Activated T-helper 1 cell treated with anti-CD3 and anti-CD28 coated beads, Interleukin-12 subunit alpha, Interleukin-12 subunit beta, Interleukin-2, Interleukin-4 antibody, amounts not matched to agents 30 ng/mL and 10 ng/mL and 1 ng/mL, durations not matched to agents 14 hours and 24 hours and 36 hours (primary cell): ENCODE measurements at regions of chr6 and their contacts with region 1.

Region 1: DNA sequence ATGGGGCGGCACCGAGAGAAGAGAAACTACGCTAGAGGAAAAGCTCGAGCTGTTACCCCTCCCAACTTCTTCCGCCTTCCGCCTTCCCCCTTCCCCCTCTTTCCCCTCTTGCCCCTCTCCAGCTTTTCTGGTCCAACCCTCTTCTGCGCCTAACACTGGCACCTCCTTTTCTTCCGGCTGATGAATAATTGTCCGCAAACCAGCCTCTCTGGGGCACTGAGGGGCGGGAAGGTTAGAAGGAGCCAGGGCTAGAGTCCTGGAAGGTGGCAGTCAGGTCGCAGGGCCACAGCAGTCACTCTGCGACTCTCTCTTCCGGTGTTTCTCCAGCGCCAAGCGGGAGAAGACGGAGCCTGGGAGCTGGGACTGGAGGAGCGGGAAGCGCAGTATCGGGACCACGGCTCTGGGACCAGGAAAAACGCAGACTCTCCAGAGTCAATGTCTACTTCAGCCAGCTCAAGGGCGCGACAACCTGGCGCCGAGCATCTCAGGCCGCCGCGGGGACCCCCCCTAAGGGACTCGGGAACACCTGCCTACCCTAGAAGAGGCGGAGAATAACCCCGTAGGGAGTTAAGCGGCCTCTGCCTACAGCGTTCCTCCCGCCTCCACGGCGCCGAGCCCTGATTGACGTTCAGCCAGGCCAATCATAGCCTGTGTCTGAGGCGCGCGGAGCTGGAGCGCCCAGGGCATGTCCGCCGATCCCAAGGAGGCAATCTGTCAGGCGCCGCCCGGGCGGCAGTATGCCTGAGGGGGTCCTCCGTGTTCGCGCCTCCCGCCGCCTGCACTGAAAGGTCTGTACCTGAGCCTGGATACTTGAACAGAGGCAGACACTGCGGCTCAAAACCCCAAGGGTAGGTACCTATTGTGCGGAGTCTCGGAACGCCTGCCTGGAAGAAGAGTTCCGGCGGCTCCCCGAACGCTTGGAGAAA is 40.4 kb downstream of the PSMB9 start:
- DNase-seq: peak; percentile 95
- H3K4me3 Mint-ChIP-seq: peak overlapping the region; percentile 99
- H3K27ac Mint-ChIP-seq: peak overlapping the region; percentile 92
- H3K4me1 Mint-ChIP-seq: peaks cover 48% of the 10 kb centered on the region
- H3K27me3 Mint-ChIP-seq: peaks cover 12% of the 10 kb centered on the region

Region 2: GRCh38 chr6:32838114-32838958 is 56.0 kb before region 1 on chr6 and contains the start of gene TAP2:
- intact Hi-C with region 1: loop called (anchors 2 kb)
- DNase-seq: peak; percentile 97
- H3K4me3 Mint-ChIP-seq: peak within 1 kb of the TSS; percentile 79
- H3K27ac Mint-ChIP-seq: peak within 1 kb of the TSS; percentile 89
- H3K4me1 Mint-ChIP-seq: peaks cover 87% of the 10 kb centered on the region
- H3K27me3 Mint-ChIP-seq: no peaks in the 10 kb centered on the region
- total RNA-seq, gene TAP2: 160 and 167 TPM in 2 replicates

Region 3: DNA sequence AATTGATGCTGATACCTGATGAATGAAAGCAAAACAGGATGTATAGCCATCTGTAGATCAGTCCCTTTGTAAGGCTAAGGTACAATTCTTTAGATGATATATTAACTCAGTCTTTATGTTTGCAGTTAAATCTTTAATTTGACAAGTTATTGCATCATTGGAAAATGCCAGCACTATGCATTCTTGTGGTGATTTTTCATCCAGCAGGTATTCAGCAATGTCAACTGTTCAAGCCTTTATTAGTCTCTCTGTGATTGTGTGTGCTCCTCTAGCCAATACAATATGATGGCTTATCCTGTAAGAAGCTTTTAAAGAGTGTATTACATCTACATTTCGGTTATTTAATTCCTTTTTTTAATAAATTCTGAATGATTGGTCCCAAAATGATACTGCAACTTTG is 12.2 kb after region 1 on chr6:
- intact Hi-C with region 1: no loop called
- DNase-seq: no peak
- H3K4me3 Mint-ChIP-seq: no peak overlapping the region
- H3K27ac Mint-ChIP-seq: no peak overlapping the region
- H3K4me1 Mint-ChIP-seq: no peaks in the 10 kb centered on the region
- H3K27me3 Mint-ChIP-seq: peaks cover 6% of the 10 kb centered on the region

Region 4: DNA sequence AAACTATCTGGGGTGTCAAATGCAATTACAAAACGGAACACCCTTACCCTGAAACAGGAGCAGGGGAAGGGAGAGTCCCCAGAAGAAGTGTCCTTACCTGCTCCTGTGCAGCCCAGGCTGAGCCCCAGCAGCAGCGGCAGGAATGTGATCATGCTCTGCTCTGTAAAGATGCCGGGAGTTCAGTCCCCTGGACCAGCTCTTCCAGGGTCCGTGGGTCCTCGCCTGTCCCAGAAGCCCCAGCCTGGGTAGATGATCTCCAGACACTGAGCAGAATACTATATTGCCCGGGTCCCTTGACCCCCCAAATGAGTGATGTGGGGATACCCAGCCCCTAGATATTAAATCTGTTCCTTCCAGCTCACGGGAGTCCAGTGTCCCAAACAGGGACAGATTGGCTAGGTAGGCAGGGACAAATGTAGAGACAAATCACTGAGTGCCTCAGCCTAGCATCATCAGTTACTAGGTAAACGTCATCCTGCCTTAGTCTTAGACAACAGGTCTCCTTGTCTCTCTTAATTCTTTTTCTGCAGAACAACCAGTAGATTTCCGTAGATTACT is 46.4 kb after region 1 on chr6 and contains the start of gene HLA-DMB:
- intact Hi-C with region 1: loop called (anchors 1 kb)
- DNase-seq: peak; percentile 52
- H3K4me3 Mint-ChIP-seq: peak within 1 kb of the TSS; percentile 80
- H3K27ac Mint-ChIP-seq: peak within 1 kb of the TSS; percentile 91
- H3K4me1 Mint-ChIP-seq: peaks cover 59% of the 10 kb centered on the region
- H3K27me3 Mint-ChIP-seq: peaks cover 4% of the 10 kb centered on the region
- total RNA-seq, gene HLA-DMB: 2.7 and 2.8 TPM in 2 replicates

Region 5: DNA sequence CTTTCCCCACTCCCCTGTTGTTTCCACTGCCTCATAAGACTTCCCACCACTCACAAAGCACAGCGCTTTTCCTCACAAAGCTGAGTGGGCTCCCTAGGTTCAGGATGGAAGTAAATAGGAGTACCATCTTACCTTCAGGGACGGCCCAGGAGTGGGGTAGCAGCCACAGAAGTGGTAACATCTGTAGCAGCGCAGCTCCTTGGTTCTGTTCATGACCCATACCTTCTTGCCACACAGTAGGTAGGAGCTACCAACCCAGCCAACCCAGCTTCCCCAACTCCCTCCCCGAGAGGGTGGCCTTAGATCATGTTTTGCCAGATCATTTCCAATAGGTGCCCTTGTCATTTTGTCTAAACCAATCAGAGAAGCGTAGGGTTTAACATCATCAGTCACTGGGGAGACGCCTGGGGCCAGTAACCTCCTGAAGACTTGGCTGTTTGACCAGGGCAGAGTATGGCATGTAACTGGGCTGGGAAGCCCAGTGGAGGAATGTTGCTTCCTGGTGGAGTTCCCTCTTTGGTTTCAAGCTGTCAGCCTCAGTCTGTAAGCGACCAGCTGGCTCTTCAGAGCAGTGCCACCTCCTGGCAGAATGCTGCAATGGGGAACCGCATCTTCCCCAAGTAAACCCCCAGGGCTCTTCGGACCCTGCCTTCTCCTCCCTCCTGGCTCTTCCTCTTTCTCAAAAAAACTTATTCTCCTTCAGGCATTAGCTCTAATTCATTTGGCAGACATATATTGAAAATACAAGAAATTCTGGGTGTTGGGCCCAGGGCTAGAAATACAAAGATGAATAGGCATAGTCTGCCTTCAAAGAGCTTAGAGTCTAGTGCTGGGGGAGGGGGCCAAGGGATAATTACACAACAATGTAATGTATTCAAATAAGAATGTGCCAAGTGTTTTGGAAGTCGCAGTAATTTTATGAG is 58.7 kb after region 1 on chr6 and contains the start of gene HLA-DMA:
- intact Hi-C with region 1: loop called (anchors 1 kb)
- DNase-seq: peak; percentile 79
- H3K4me3 Mint-ChIP-seq: peak within 1 kb of the TSS; percentile 81
- H3K27ac Mint-ChIP-seq: peak within 1 kb of the TSS; percentile 72
- H3K4me1 Mint-ChIP-seq: peaks cover 57% of the 10 kb centered on the region
- H3K27me3 Mint-ChIP-seq: no peaks in the 10 kb centered on the region
- total RNA-seq, gene HLA-DMA: 14.1 and 14.2 TPM in 2 replicates

Region 6: GRCh38 chr6:32984605-32985389 is 90.5 kb after region 1 on chr6:
- intact Hi-C with region 1: loop called (anchors 2 kb)
- DNase-seq: peak; percentile 78
- H3K4me3 Mint-ChIP-seq: no peak overlapping the region
- H3K27ac Mint-ChIP-seq: peak overlapping the region; percentile 73
- H3K4me1 Mint-ChIP-seq: peaks cover 37% of the 10 kb centered on the region
- H3K27me3 Mint-ChIP-seq: no peaks in the 10 kb centered on the region

Region 7: GRCh38 chr6:33075568-33076405 is 181.4 kb after region 1 on chr6 and contains the start of gene HLA-DPB1:
- intact Hi-C with region 1: loop called (anchors 5 kb)
- DNase-seq: peak; percentile 40
- H3K4me3 Mint-ChIP-seq: peak within 1 kb of the TSS; percentile 78
- H3K27ac Mint-ChIP-seq: peak within 1 kb of the TSS; percentile 47
- H3K4me1 Mint-ChIP-seq: peaks cover 60% of the 10 kb centered on the region
- H3K27me3 Mint-ChIP-seq: peaks cover 4% of the 10 kb centered on the region
- total RNA-seq, gene HLA-DPB1: 12.2 and 12.3 TPM in 2 replicates